ENCODE measurements at regions of chr13 and their contacts with region 1.

Region 1: GRCh38 chr13:44484562-44485138 is 91.5 kb downstream of the TSC22D1 start:
- DNase-seq: no peak
- H3K4me3 ChIP-seq: no peak overlapping the region
- H3K27ac ChIP-seq: no peak overlapping the region
- H3K4me1 ChIP-seq: peaks cover 5% of the 10 kb centered on the region
- CTCF ChIP-seq: no peak

Region 2: GRCh38 chr13:44498969-44499368 is 14.3 kb after region 1 on chr13:
- CTCF ChIA-PET with region 1: no interaction called
- POLR2A ChIA-PET with region 1: no interaction called
- intact Hi-C with region 1: no loop called
- DNase-seq: no peak
- H3K4me3 ChIP-seq: no peak overlapping the region
- H3K27ac ChIP-seq: no peak overlapping the region
- H3K4me1 ChIP-seq: no peaks in the 10 kb centered on the region
- CTCF ChIP-seq: no peak

Region 3: GRCh38 chr13:44879463-44880058 is 394.9 kb after region 1 on chr13:
- CTCF ChIA-PET with region 1: no interaction called
- POLR2A ChIA-PET with region 1: interaction called, 3 read pairs
- intact Hi-C with region 1: loop called (anchors 1 kb)
- DNase-seq: peak; percentile 43
- H3K4me3 ChIP-seq: no peak overlapping the region
- H3K27ac ChIP-seq: no peak overlapping the region
- H3K4me1 ChIP-seq: no peaks in the 10 kb centered on the region
- CTCF ChIP-seq: peak; percentile 77

Region 4: GRCh38 chr13:44969551-44970484 is 485.2 kb after region 1 on chr13:
- CTCF ChIA-PET with region 1: no interaction called
- POLR2A ChIA-PET with region 1: interaction called, 3 read pairs
- intact Hi-C with region 1: loop called (anchors 5 kb)
- DNase-seq: peak; percentile 32
- H3K4me3 ChIP-seq: no peak overlapping the region
- H3K27ac ChIP-seq: no peak overlapping the region
- H3K4me1 ChIP-seq: no peaks in the 10 kb centered on the region
- CTCF ChIP-seq: peak; percentile 92